ENCODE measurements at regions of chr3 and their contacts with region 1.

Region 1: DNA sequence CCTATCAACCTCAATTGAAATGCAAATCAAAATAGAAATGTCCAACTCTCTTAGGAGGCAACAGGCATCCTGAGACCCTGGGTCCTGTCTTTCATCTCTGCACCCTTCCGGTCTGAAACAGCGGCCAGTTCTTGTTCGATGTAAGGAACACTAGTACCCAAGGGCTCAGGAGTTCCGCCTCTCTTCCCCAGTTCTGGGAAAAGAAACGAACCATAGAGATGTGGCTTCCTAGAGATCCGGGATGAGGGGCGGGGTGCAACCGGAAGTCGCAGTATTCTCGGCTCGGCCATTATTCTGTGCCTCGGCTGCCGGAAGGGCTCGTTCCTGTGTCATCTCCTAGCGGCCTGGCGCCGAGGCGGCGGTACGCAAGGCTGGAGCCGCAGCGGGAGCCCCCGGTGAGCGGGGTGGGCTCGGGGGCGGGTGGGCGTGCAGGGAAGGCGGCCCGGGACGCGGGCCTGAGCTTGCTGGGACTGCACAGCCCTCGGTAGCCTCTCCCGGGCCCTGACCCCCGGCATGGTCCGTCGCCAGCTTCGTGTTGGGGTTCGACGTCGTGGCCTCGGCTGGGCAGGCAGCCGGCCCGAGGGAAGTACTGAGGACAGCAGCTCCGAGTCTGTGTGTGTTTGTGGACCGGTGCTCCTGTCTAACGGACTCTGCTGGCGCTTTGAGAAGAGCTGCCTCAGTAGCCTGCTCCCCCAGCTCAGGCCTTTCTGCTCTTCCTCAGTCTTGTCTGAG is at the start of gene ZNF197:
- DNase-seq: peak; percentile 86
- H3K4me3 ChIP-seq: peak within 1 kb of the TSS; percentile 78 to 97 (median 94)
- H3K27ac ChIP-seq: peak within 1 kb of the TSS; percentile 59
- H3K4me1 ChIP-seq: peaks cover 5% of the 10 kb centered on the region
- H3K27me3 ChIP-seq: no peaks in the 10 kb centered on the region
- CTCF ChIP-seq: peak in 1 of 2 donors; percentile 25
- total RNA-seq, gene ZNF197: 13.3 to 16.0 TPM

Region 2: GRCh38 chr3:44477312-44478030 is 147.4 kb before region 1 on chr3 and contains the start of gene ZNF445:
- CTCF ChIA-PET with region 1: no interaction called
- dilution Hi-C with region 1: no loop called
- in situ Hi-C with region 1: no loop called
- intact Hi-C with region 1: loop called (anchors 5 kb)
- DNase-seq: peak; percentile 71
- H3K4me3 ChIP-seq: peak within 1 kb of the TSS; percentile 57 to 90 (median 77)
- H3K27ac ChIP-seq: peak within 1 kb of the TSS; percentile 33
- H3K4me1 ChIP-seq: peaks cover 10% of the 10 kb centered on the region
- H3K27me3 ChIP-seq: no peaks in the 10 kb centered on the region
- CTCF ChIP-seq: no peak
- total RNA-seq, gene ZNF445: 7.5 to 14.2 TPM

Region 3: DNA sequence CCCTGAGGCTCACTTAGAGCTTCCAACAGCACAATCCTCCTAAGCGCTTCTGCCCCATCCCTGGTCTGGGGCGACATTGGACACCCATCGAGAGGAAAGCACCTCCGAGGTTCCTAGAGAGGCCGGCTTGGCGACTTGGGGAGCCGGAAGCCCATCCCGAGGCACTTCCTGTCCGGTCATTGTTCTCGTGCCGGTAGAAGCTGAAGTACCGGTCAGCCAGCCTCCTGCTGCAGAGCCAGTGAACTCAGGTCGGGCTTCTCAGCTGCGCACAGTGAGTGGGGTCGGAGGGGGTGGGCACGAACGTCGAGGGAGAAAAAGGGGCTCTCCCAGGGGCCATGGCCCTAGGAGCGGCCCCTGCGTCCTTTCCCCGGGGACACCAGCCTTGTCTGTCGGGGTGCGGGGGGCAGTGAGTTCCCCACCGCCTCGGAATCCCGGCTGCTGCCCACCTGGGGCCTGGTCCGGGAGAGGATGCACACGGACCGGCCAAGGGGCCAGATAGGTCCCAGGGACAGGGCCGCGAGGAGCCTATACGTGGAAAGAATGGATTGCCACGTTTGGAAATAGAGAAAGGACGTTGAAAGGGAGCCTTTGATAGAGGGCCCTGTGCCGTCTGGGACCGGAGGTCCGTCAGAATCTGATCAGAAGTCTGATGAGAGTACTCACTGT is 23.8 kb after region 1 on chr3 and contains the start of gene ZNF35:
- CTCF ChIA-PET with region 1: no interaction called
- dilution Hi-C with region 1: no loop called
- in situ Hi-C with region 1: no loop called
- intact Hi-C with region 1: loop called (anchors 1 kb)
- DNase-seq: peak; percentile 85
- H3K4me3 ChIP-seq: peak within 1 kb of the TSS; percentile 91 to 94 (median 94)
- H3K27ac ChIP-seq: peak within 1 kb of the TSS; percentile 52
- H3K4me1 ChIP-seq: no peaks in the 10 kb centered on the region
- H3K27me3 ChIP-seq: no peaks in the 10 kb centered on the region
- CTCF ChIP-seq: no peak
- total RNA-seq, gene ZNF35: 11.5 to 16.3 TPM

Region 4: DNA sequence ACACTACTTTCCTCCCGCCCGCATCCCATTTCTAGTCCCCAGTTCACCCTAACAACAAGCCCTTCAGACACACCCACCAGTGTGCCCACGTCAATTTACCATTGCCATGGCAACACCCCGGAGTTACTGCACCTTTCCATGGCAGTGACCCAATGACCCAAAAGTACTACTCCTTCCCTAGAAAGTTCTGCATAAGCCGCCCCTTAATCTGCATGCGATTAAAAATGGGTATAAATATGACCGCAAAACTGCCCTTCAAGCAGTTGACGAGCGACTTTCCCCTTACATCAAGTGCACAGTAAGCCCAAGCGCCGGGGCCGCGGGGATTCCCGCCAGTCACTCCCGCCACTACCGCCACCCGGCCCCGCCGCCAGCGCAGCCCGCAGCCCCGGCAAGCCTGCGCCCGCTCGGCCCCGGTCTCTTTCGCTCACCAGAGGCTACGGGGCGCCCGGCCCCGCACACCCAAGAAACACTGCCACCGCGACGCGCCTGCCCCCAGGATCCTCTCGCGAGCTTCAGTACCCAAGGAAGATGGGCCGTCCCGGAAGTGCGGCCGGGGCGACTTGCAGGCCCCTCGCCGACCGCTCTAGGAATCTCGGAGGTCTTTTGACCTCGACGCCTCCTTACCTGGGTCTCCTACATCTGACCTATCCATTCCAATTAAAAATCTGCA is 60.3 kb after region 1 on chr3:
- CTCF ChIA-PET with region 1: no interaction called
- dilution Hi-C with region 1: no loop called
- in situ Hi-C with region 1: no loop called
- intact Hi-C with region 1: loop called (anchors 1 kb)
- DNase-seq: peak; percentile 53
- H3K4me3 ChIP-seq: peak overlapping the region; percentile 54 to 69 (median 60)
- H3K27ac ChIP-seq: no peak overlapping the region
- H3K4me1 ChIP-seq: no peaks in the 10 kb centered on the region
- H3K27me3 ChIP-seq: no peaks in the 10 kb centered on the region
- CTCF ChIP-seq: no peak

Region 5: DNA sequence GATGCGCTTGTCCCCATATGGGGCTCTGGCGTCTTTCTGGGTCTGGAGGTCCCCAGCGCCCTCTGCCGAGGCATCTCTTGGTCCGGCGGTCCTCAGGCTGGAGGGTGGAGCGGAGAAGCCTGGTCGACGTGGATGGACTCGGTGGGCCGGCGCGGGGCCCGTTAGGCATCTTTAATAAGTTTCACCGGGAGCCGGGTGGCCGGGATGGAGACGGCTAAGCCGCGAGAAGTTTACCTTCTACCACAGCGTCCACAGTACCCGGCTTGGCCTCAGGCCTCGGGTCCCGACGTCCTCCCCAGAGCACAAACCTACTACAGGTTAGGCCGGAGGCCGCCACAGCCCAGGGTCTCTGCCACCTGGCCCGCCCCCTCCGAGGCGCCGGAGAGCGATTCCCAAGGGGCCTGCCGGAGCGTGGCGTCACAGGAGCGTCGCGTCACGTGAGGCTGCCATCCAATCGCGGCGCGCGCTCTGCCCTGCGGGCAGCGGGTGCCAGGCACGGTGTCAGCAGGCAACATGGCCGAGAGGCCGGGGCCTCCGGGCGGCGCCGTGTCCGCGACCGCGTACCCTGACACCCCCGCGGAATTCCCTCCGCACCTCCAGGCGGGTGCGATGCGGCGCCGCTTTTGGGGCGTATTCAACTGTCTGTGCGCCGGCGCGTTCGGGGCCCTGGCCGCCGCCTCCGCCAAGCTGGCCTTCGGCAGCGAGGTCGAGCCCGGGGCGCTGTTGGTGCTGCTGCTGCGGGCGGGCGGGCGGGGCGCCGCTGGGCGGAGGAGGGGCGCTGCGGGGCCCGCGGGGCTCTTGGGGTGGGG is 236.7 kb after region 1 on chr3 and contains the start of gene TMEM42:
- CTCF ChIA-PET with region 1: no interaction called
- dilution Hi-C with region 1: no loop called
- in situ Hi-C with region 1: no loop called
- intact Hi-C with region 1: no loop called
- DNase-seq: peak; percentile 73
- H3K4me3 ChIP-seq: peak within 1 kb of the TSS; percentile 15 to 57 (median 43)
- H3K27ac ChIP-seq: no peak within 1 kb of the TSS
- H3K4me1 ChIP-seq: peaks cover 4% of the 10 kb centered on the region
- H3K27me3 ChIP-seq: no peaks in the 10 kb centered on the region
- CTCF ChIP-seq: no peak
- total RNA-seq, gene TMEM42: 11.8 to 12.9 TPM